Activated CD8-positive, alpha-beta T cell treated with anti-CD3 and anti-CD28 coated beads for 36 hours (primary cell): ENCODE measurements at regions of chr11 and their contacts with region 1.

Region 1: GRCh38 chr11:95680169-95680929 is 109.2 kb downstream of the FAM76B start:
- DNase-seq: no peak
- ATAC-seq: no peak
- H3K4me3 Mint-ChIP-seq: no peak overlapping the region
- H3K27ac Mint-ChIP-seq: peak overlapping the region; percentile 89
- H3K4me1 Mint-ChIP-seq: peaks cover 86% of the 10 kb centered on the region
- H3K27me3 Mint-ChIP-seq: no peaks in the 10 kb centered on the region
- CTCF ChIP-seq: no peak

Region 2: GRCh38 chr11:95556342-95557163 is 123.8 kb before region 1 on chr11:
- CTCF ChIA-PET with region 1: no interaction called
- POLR2A ChIA-PET with region 1: no interaction called
- intact Hi-C with region 1: loop called (anchors 5 kb)
- DNase-seq: peak; percentile 41
- ATAC-seq: peak; percentile 87
- H3K4me3 Mint-ChIP-seq: no peak overlapping the region
- H3K27ac Mint-ChIP-seq: peak overlapping the region; percentile 83
- H3K4me1 Mint-ChIP-seq: peaks cover 24% of the 10 kb centered on the region
- H3K27me3 Mint-ChIP-seq: no peaks in the 10 kb centered on the region
- CTCF ChIP-seq: no peak